ENCODE measurements at regions of chr15 and their contacts with region 1.

Region 1: DNA sequence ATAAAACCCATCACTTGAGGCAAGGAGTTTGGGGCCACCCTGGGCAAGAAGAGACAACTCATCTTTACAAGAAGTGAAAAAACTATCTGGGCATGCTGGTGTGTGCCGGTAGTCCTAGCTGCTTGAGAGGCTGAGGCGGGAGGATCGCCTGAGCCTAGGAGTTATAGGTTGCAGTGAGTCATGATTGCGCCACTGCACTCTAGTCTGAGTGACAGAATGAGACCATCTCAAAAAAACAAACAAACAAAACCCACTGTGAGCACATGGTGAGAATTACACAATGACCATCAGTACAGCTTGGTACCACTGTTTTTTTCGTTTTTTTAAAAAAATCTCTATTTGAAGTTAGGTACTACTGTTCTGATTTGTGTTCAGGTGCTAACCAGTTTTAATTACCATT is 13.6 kb downstream of the VPS39 start:
- DNase-seq: peak; percentile 71
- H3K4me3 Mint-ChIP-seq: no peak overlapping the region
- H3K27ac Mint-ChIP-seq: peak overlapping the region; percentile 94
- H3K4me1 Mint-ChIP-seq: peaks cover 63% of the 10 kb centered on the region
- H3K27me3 Mint-ChIP-seq: no peaks in the 10 kb centered on the region

Region 2: GRCh38 chr15:41789236-41789635 is 405.3 kb before region 1 on chr15:
- CTCF ChIA-PET with region 1: no interaction called
- intact Hi-C with region 1: no loop called
- DNase-seq: no peak
- H3K4me3 Mint-ChIP-seq: no peak overlapping the region
- H3K27ac Mint-ChIP-seq: no peak overlapping the region
- H3K4me1 Mint-ChIP-seq: peaks cover 32% of the 10 kb centered on the region
- H3K27me3 Mint-ChIP-seq: no peaks in the 10 kb centered on the region

Region 3: DNA sequence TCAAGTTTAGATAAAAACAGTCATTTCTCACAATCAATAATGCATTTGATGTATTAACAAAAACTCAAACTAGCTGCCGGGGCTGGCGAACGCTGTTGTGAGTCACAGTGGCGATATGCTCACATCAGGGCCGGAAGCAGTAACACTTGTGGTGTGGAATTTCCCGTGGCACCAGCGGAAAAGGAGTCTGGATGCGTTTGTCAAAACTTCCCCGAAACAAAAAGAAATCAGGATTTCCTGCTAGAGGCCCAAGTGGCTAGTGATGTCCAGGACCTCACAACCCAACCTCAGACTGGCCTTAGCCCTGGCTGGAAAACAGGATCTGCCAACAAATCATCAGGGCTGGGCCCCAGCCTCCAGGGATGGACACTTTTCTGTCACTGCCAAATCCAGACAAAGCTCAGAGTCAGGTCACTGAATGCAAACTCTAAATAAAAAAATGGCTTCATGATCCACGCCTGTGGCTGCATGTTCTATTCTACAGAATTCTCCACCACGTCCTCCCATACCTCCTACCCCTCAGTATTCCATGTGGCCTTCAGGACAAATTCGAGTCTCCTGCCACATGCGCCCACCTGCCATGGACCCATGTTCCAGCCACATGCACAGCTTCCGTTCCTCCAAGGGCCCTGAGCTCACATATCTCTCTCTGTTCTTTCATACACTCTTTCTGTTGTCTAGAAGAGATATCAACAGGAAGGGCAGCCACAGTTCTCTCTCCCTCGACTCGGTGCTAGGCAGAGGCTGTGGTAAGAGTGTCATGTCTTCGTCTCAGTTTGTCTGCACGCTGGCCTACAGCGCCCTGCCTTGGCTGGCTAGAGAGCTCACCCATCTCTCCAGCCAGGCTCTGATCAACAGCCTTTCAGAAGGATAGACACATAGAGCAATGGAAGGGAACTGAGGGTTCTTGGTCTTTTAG is 257.6 kb before region 1 on chr15:
- CTCF ChIA-PET with region 1: no interaction called
- intact Hi-C with region 1: loop called (anchors 1 kb)
- DNase-seq: peak; percentile 95
- H3K4me3 Mint-ChIP-seq: peak overlapping the region; percentile 68
- H3K27ac Mint-ChIP-seq: peak overlapping the region; percentile 100
- H3K4me1 Mint-ChIP-seq: peaks cover 71% of the 10 kb centered on the region
- H3K27me3 Mint-ChIP-seq: no peaks in the 10 kb centered on the region

Region 4: GRCh38 chr15:42035435-42035761 is 159.1 kb before region 1 on chr15:
- CTCF ChIA-PET with region 1: no interaction called
- intact Hi-C with region 1: loop called (anchors 5 kb)
- DNase-seq: peak; percentile 73
- H3K4me3 Mint-ChIP-seq: peak overlapping the region; percentile 3
- H3K27ac Mint-ChIP-seq: peak overlapping the region; percentile 34
- H3K4me1 Mint-ChIP-seq: peaks cover 19% of the 10 kb centered on the region
- H3K27me3 Mint-ChIP-seq: no peaks in the 10 kb centered on the region

Region 5: DNA sequence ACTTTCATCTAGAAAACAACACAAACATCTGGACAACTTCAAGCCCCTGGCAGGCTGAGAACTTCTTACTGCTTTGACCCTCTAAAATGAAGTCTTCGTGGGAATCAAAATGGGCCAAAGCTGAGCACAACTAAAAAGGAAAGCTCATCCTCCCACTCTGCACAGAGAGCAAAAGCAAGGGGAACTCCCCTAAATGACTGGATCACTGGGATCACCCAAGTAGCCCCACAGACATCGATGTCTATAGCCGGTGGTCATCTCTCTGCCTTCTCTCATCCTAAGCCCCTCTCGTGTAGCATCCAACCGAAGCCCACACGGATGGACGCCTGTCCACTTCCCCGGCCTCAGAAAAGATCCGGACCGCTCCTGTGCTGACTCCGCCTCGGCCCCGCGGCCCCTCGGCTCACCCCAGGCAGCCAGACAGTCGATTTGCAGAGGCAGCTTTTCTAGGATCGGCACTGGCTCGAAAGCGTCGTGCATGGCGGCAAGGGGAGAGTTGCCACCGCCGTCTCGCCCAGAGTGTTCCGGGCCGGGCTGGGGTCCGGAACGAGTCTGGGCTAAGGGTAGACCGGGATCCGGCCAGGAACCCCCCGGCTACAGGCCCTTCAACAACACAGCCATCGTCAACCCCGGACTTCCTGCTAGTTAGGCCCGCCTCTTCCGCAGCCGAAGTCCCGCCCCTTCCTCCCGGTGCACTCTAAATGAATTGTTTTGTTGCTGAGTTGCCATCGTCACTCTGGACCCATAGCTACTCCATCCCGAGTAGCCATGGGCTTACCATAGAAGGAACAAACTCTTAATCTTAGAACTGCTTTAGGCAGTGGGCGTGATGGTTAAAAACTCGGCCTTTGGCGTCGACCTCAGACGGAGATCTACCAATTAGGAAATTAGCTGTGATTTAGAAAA is 13.4 kb after region 1 on chr15 and contains the start of gene VPS39:
- CTCF ChIA-PET with region 1: interaction called, 3 read pairs
- intact Hi-C with region 1: loop called (anchors 1 kb)
- DNase-seq: peak; percentile 92
- H3K4me3 Mint-ChIP-seq: peak within 1 kb of the TSS; percentile 88
- H3K27ac Mint-ChIP-seq: peak within 1 kb of the TSS; percentile 92
- H3K4me1 Mint-ChIP-seq: peaks cover 33% of the 10 kb centered on the region
- H3K27me3 Mint-ChIP-seq: no peaks in the 10 kb centered on the region
- total RNA-seq, gene VPS39: 58.9 to 60.7 TPM

Region 6: GRCh38 chr15:42495361-42496212 is 301.1 kb after region 1 on chr15 and contains the start of gene SNAP23:
- CTCF ChIA-PET with region 1: no interaction called
- intact Hi-C with region 1: loop called (anchors 5 kb)
- DNase-seq: peak; percentile 87
- H3K4me3 Mint-ChIP-seq: peak within 1 kb of the TSS; percentile 99
- H3K27ac Mint-ChIP-seq: peak within 1 kb of the TSS; percentile 94
- H3K4me1 Mint-ChIP-seq: peaks cover 65% of the 10 kb centered on the region
- H3K27me3 Mint-ChIP-seq: no peaks in the 10 kb centered on the region
- total RNA-seq, gene SNAP23: 33.1 to 34.5 TPM

Region 7: DNA sequence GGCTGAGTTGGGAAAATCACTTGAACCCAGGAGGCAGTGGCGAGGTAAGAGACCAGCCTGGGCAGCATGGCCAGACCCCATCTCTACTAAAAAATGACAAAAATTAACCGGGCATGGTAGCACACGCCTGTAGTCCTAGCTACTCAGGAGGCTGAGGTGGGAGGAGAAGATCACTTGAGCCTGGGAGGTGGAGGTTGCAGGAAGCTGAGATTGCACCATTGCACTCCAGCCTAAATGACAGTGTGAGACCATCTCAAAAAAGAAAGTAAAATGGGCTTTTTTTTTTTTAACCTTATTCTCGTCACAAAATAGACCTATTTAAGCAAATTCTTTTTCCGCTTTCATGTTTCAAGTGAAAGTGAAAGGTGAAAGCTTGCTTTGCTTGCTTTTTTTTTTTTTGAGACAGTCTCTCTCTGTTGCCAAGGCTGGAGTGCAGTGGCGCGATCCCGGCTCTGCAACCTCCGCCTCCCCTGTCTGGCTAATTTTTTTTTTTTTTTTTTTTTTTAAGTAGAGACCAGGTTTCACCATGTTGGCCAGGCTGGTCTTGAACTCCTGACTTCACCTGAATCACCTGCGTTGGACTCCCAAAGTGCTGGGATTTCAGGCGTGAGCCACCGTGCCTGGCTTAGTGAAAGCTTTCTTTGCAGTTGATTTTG is 1555.3 kb after region 1 on chr15:
- CTCF ChIA-PET with region 1: no interaction called
- intact Hi-C with region 1: loop called (anchors 5 kb)
- DNase-seq: peak; percentile 71
- H3K4me3 Mint-ChIP-seq: peak overlapping the region; percentile 74
- H3K27ac Mint-ChIP-seq: peak overlapping the region; percentile 89
- H3K4me1 Mint-ChIP-seq: peaks cover 53% of the 10 kb centered on the region
- H3K27me3 Mint-ChIP-seq: no peaks in the 10 kb centered on the region

Measured in activated naive CD4-positive, alpha-beta T cell treated with anti-CD3 and anti-CD28 coated beads for 36 hours (primary cell).